Activated T-helper 2 cell treated with anti-CD3 and anti-CD28 coated beads, Interferon-gamma antibody, Interleukin-2, Interleukin-4, amounts not matched to agents 10 μg/mL and 5 μg/mL and 100 μg/mL, durations not matched to agents 14 hours and 24 hours and 36 hours (primary cell): ENCODE measurements at regions of chrX and their contacts with region 1.

Region 1: DNA sequence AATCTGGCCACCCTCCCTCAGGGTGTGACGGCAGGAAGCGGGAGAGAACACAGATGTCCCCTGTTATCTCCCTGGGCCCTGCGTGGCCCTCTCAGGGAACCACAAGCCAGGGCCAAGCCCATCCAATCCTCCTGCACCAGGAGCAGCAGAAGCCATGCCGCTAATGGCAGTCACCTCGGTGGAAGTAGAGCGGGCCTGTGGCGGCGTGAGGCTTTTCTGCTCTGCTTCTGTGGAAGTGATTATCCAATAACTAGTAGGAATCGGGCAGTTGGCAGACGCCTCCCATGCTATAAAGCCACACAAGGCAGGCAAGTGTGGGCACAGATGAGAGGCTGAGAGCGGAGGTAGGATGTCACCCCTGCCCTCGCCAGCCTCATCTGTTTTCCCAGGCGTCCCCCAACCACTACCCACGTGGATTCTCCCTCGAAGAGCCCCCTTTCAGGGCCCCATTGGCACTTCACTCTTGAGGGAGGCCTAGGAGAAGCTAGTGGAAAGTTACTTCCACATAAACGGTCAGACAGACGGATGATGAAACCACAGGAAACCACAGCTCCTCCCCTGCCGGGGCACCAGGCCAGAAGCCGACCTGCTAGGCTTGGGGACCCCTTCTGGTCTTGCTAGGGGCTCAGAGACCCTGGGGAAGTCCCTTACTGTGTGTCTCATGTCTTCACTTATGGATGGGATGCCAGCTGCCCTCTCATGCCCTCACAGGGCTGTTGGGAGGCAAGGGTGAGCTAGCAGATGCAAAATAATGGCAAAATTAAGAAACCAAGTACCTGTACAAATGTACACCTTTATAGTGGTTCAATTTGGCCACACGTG is 18.8 kb upstream of the TMSB4X start:
- DNase-seq: peak; percentile 57
- H3K4me3 Mint-ChIP-seq: peak overlapping the region; percentile 87
- H3K27ac Mint-ChIP-seq: peak overlapping the region; percentile 95
- H3K4me1 Mint-ChIP-seq: peaks cover 61% of the 10 kb centered on the region
- H3K27me3 Mint-ChIP-seq: no peaks in the 10 kb centered on the region

Region 2: DNA sequence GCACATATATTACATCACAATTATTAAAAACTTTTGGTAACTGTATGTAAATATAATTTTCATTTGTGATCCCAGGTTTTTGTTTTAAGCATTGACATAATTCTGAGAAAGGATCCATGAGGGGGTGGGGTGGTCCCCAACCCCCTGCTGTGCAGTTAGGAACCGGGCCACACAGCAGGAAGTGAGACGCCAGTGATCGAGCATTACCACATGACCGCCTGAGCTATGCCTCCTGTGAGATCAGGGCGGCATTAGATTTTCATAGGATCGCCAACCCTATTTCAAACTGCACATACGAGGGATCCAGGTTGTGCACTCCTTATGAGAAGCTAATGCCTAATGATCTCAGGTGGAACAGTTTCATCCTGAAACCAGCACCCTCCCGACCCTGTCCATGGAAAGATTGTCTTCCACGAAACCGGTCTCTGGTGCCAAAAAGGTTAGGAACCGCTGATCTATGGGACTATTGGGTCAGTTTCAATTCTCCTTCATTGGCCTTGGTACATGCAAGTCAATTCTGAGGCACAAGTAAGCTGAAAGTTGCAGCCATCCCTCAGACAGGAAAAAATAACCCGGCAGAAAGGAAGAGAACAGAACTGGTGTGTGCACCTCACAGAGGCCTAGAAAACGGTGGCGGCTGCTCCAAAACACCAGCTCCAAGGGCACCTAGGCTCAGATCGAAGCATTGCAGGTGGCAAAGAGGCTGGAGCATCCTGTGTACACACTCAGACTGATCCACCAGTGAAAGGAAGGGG is 11.8 kb after region 1 on chrX:
- intact Hi-C with region 1: loop called (anchors 1 kb)
- DNase-seq: no peak
- H3K4me3 Mint-ChIP-seq: peak overlapping the region; percentile 78
- H3K27ac Mint-ChIP-seq: peak overlapping the region; percentile 92
- H3K4me1 Mint-ChIP-seq: peaks cover 44% of the 10 kb centered on the region
- H3K27me3 Mint-ChIP-seq: no peaks in the 10 kb centered on the region

Region 3: DNA sequence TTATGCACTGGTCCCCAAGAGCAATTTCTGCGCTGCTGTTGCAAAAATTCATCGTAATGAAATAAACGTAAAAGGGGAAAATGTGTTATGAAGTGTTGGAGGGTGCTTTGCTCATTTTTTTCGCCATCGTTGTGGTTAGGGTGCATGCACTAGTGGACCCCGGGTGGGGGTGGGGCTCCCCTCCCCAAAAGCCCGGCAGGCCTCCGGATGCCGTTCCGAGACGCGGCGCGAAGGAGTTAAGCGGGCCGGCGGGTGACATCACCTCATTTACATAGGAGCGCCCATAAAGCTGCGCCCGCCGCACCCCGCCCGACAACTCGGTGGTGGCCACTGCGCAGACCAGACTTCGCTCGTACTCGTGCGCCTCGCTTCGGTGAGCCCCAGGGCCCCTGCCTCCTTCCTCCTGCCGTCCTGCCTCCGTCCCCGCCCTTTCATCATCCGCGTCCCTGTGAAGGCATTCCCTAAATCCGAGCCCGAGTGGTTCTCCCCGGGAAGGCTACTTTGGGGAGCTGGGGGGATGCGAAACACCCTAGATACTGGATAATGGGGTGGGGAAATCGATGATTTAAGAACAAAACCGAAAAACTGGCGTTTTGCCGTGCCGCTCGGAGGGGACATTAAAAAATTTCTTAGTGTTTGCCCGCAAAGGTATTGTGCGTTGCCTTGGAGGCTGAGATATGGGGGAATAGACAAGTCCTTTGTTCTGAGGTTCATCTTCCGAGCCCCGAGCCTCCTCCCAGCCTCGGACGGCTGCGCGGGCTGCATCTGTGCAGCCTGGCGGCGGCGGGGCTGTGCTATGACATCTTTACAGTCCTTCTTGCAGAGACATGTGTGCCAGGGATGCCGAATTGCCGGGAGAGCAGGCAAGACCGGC is 18.9 kb after region 1 on chrX and contains the start of gene TMSB4X:
- intact Hi-C with region 1: loop called (anchors 1 kb)
- DNase-seq: peak; percentile 84
- H3K4me3 Mint-ChIP-seq: peak within 1 kb of the TSS; percentile 96
- H3K27ac Mint-ChIP-seq: peak within 1 kb of the TSS; percentile 95
- H3K4me1 Mint-ChIP-seq: peaks cover 35% of the 10 kb centered on the region
- H3K27me3 Mint-ChIP-seq: no peaks in the 10 kb centered on the region
- total RNA-seq, gene TMSB4X: 7,759 and 7,983 TPM in 2 replicates

Region 4: DNA sequence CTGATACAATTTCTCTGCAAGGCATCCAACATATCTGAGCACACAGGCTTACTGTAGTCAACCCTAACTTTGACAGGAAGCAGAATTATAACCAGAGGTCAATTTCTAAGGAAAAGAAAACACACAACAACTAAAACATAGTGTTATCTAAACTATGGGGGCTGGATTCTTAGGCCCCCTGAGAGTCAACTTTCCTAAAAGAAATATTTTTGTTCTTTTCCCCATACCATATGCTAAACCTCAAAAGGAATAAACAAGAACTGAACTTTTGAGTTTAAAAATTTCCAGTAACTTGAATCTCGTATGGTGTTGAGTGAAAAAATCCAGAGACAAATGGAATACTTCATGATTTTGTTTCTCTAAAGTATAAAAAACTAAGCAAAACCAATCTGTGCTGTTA is 320.9 kb after region 1 on chrX:
- intact Hi-C with region 1: no loop called
- DNase-seq: no peak
- H3K4me3 Mint-ChIP-seq: no peak overlapping the region
- H3K27ac Mint-ChIP-seq: no peak overlapping the region
- H3K4me1 Mint-ChIP-seq: peaks cover 16% of the 10 kb centered on the region
- H3K27me3 Mint-ChIP-seq: no peaks in the 10 kb centered on the region